CD8-positive, alpha-beta T cell (primary cell): ENCODE measurements at regions of chr11 and their contacts with region 1.

Region 1: DNA sequence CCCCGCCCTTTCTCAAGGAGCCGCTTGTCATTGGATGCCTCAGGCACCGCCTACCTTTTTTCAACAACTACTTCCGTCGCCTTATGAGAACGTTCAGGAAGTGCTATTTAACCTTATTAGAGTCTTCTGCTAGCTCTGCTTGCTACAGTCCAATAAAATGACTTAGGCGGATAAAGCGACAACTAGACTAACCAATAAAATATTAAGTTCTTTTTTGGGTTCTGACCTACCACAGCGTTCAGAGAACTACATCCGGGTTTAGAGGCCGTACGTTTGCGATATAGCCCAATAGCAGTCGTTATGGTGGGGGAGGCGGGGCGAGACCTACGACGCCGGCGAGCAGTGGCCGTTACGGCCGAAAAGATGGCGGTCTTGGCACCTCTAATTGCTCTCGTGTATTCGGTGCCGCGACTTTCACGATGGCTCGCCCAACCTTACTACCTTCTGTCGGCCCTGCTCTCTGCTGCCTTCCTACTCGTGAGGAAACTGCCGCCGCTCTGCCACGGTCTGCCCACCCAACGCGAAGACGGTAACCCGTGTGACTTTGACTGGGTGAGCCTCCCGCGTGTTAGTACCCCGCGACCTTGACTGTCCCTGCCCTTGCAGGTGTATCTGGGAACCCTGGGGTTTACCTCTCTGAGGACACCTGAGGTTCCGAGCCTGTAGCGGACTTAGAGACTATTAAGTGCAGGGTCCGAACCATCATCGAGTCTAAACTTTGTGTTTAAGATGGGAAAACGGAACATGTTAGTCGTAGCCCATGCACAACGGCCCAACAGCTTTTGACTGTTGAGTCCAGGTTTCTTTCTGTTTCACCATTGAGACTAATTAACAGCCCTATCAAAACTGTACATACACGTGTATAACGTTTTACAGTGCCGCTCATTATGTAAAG is at the start of gene TMX2:
- DNase-seq: peak; percentile 78 to 97 (median 88)
- ATAC-seq: peak; percentile 87
- H3K4me3 ChIP-seq: peak within 1 kb of the TSS; percentile 98 to 100
- H3K4me3 Mint-ChIP-seq: peak within 1 kb of the TSS; percentile 98
- H3K27ac ChIP-seq: peak within 1 kb of the TSS; percentile 91 to 93
- H3K27ac Mint-ChIP-seq: peak within 1 kb of the TSS; percentile 97
- H3K4me1 ChIP-seq: peaks cover 33% of the 10 kb centered on the region
- H3K4me1 Mint-ChIP-seq: peaks cover 52% of the 10 kb centered on the region
- H3K27me3 ChIP-seq: no peaks in the 10 kb centered on the region
- H3K27me3 Mint-ChIP-seq: no peaks in the 10 kb centered on the region
- CTCF ChIP-seq: no peak
- total RNA-seq, gene TMX2: 38.5 to 42.1 TPM

Region 2: DNA sequence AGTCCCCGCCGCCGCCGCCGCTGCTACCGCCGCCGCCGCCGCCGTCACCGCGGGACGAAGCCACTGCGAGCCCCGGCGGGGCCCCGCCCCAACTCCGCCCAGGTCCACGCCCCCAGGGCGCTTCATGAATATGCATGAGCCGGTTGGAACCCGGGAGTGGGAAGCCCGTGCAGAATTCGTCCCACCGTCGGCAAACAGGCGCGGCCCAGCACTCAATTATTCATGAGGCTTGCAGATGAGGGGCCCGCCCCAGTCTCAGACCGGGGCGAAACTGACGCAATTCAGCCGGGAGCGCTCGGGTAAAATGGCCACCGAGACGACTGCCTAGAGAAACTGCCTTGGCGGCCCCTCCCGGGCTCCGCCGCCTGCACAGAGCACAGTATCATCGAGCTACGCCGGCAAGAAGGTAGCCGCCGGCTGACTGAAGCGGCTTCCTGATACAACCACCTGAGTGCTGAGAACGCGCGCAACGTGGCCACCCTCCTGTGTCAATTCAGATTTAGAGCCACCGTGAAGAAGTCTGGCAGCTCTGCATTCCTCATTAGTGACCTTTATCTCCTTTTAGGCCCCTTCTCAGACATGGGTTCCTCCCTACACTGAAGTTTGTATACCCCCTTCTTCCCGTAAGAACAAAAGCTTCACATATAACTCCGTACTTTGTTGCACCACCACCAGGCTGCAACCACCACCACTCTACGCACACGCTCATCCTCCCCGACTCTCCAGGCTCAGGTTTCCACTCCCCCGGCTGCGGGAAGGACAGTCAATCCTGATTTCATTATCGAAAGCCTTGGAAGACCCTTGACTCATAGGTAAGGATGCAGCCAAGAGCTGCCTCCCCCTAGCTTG is 387.4 kb before region 1 on chr11 and contains the start of gene TNKS1BP1:
- CTCF ChIA-PET with region 1: no interaction called
- POLR2A ChIA-PET with region 1: no interaction called
- intact Hi-C with region 1: loop called (anchors 1 to 5 kb)
- DNase-seq: peak; percentile 74 to 93 (median 88)
- ATAC-seq: peak; percentile 88
- H3K4me3 ChIP-seq: peak within 1 kb of the TSS; percentile 75 to 98
- H3K4me3 Mint-ChIP-seq: peak within 1 kb of the TSS; percentile 87
- H3K27ac ChIP-seq: peak within 1 kb of the TSS; percentile 80 to 81
- H3K27ac Mint-ChIP-seq: peak within 1 kb of the TSS; percentile 96
- H3K4me1 ChIP-seq: peaks cover 29% of the 10 kb centered on the region
- H3K4me1 Mint-ChIP-seq: peaks cover 34% of the 10 kb centered on the region
- H3K27me3 ChIP-seq: no peaks in the 10 kb centered on the region
- H3K27me3 Mint-ChIP-seq: no peaks in the 10 kb centered on the region
- CTCF ChIP-seq: no peak
- total RNA-seq, gene TNKS1BP1: 13.5 to 14.0 TPM

Region 3: GRCh38 chr11:57556061-57556460 is 156.4 kb before region 1 on chr11:
- CTCF ChIA-PET with region 1: no interaction called
- POLR2A ChIA-PET with region 1: no interaction called
- intact Hi-C with region 1: loop called in 1 of 2 experiments (anchors 2 kb)
- DNase-seq: no peak
- ATAC-seq: no peak
- H3K4me3 ChIP-seq: no peak overlapping the region
- H3K4me3 Mint-ChIP-seq: no peak overlapping the region
- H3K27ac ChIP-seq: no peak overlapping the region
- H3K27ac Mint-ChIP-seq: no peak overlapping the region
- H3K4me1 ChIP-seq: peaks cover 2% of the 10 kb centered on the region
- H3K4me1 Mint-ChIP-seq: peaks cover 4% of the 10 kb centered on the region
- H3K27me3 ChIP-seq: no peaks in the 10 kb centered on the region
- H3K27me3 Mint-ChIP-seq: no peaks in the 10 kb centered on the region
- CTCF ChIP-seq: no peak

Region 4: GRCh38 chr11:57667736-57668435 is 44.6 kb before region 1 on chr11 and contains the start of gene ZDHHC5:
- CTCF ChIA-PET with region 1: no interaction called
- POLR2A ChIA-PET with region 1: interaction called, 5 read pairs
- intact Hi-C with region 1: loop called (anchors 1 kb)
- DNase-seq: peak; percentile 99 to 100 (median 99)
- ATAC-seq: peak; percentile 85
- H3K4me3 ChIP-seq: peak within 1 kb of the TSS; percentile 83 to 96
- H3K4me3 Mint-ChIP-seq: peak within 1 kb of the TSS; percentile 85
- H3K27ac ChIP-seq: peak within 1 kb of the TSS; percentile 91 to 99
- H3K27ac Mint-ChIP-seq: peak within 1 kb of the TSS; percentile 97
- H3K4me1 ChIP-seq: peaks cover 41% of the 10 kb centered on the region
- H3K4me1 Mint-ChIP-seq: peaks cover 56% of the 10 kb centered on the region
- H3K27me3 ChIP-seq: no peaks in the 10 kb centered on the region
- H3K27me3 Mint-ChIP-seq: no peaks in the 10 kb centered on the region
- CTCF ChIP-seq: peak; percentile 31
- total RNA-seq, gene ZDHHC5: 65.0 to 66.7 TPM

Region 5: DNA sequence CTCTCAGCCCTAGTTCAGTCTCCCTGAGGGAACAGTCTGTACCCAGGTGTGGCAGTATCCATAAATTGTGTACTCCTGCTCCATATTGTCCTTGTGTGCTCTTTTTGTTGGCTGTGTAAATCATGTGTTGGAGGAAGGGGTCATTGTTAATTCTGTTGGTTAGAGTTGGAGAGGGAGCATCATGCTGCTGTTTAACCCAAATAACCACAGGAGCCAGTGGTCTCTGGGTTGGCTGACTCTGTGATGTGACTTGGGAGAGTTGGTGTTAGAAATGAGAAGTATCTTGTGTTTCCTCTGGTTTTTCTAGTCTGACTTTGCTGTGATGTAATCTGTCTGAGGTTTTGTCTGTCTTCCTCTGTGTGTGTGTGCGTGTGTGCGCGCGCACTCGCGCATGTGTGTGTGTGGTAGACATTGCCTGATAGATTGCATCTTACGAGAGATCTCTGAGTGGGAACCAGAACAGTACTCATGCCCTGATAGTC is 79.6 kb after region 1 on chr11:
- CTCF ChIA-PET with region 1: no interaction called
- POLR2A ChIA-PET with region 1: no interaction called
- intact Hi-C with region 1: loop called (anchors 2 kb)
- DNase-seq: peak; percentile 78 to 95 (median 86)
- ATAC-seq: peak; percentile 95
- H3K4me3 ChIP-seq: peak overlapping the region in 1 of 2 experiments; percentile 21
- H3K4me3 Mint-ChIP-seq: peak overlapping the region; percentile 55
- H3K27ac ChIP-seq: peak overlapping the region; percentile 42 to 60
- H3K27ac Mint-ChIP-seq: peak overlapping the region; percentile 98
- H3K4me1 ChIP-seq: peaks cover 33% of the 10 kb centered on the region
- H3K4me1 Mint-ChIP-seq: peaks cover 36% of the 10 kb centered on the region
- H3K27me3 ChIP-seq: no peaks in the 10 kb centered on the region
- H3K27me3 Mint-ChIP-seq: no peaks in the 10 kb centered on the region
- CTCF ChIP-seq: no peak

Region 6: GRCh38 chr11:57885298-57886050 is 173.0 kb after region 1 on chr11:
- CTCF ChIA-PET with region 1: no interaction called
- POLR2A ChIA-PET with region 1: no interaction called
- intact Hi-C with region 1: no loop called
- DNase-seq: peak in 1 of 9 experiments; percentile 5
- ATAC-seq: no peak
- H3K4me3 ChIP-seq: no peak overlapping the region
- H3K4me3 Mint-ChIP-seq: no peak overlapping the region
- H3K27ac ChIP-seq: no peak overlapping the region
- H3K27ac Mint-ChIP-seq: no peak overlapping the region
- H3K4me1 ChIP-seq: peaks cover 9% of the 10 kb centered on the region
- H3K4me1 Mint-ChIP-seq: peaks cover 15% of the 10 kb centered on the region
- H3K27me3 ChIP-seq: no peaks in the 10 kb centered on the region
- H3K27me3 Mint-ChIP-seq: peaks cover 2% of the 10 kb centered on the region
- CTCF ChIP-seq: no peak